Right cardiac atrium (tissue), 5 donors: ENCODE measurements at regions of chr6 and their contacts with region 1.

Region 1: DNA sequence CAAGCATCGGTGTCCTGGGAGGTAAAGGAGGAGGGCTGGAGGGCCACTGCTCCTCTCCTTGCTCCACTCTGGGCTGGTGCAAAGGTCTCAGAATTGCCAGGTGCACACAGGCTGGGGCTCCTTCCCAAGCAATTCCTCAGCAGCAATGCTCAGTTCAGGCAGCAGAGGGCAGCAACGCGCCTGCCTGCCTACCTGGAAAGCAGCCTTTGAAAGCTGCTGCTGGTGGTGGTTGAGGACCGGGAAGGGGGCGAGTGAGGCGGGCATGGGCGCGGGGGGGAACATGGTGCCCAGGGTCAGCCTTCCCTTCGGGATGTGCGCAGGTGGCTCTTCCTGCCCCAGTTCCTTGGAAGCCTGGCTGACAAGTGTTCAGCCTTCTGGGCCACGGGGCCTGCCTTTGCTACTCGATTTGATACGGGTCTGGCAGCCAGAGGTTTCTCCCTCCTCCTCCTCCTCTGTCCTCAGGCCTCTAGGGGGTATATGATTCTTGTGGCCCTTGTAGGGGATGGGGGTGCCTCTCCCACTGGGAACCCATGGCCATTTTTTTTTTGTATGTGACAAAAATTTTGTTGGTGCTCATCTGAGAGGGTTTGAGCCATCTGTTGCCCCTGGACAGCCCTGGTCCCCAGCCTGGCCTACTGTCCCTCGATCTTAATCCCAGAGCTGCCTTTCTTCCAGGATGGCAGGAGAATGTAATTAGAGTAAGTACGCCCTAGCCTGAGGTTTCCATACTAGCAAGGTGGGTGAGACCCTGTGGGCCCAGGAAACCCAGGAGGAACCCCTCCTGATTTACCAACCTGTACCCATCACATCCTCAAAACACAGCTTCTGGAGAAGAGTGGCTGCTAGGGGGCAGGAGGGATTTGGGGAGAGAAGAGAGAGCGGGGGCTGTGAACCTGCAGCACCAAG is 20.1 kb downstream of the MRPS18A start:
- DNase-seq: peak; percentile 76 to 93 (median 92)
- ATAC-seq: peak; percentile 33 to 56
- H3K4me3 ChIP-seq: no peak overlapping the region
- H3K27ac ChIP-seq: peak overlapping the region; percentile 61
- H3K4me1 ChIP-seq: peaks cover 21% of the 10 kb centered on the region
- H3K27me3 ChIP-seq: no peaks in the 10 kb centered on the region

Region 2: DNA sequence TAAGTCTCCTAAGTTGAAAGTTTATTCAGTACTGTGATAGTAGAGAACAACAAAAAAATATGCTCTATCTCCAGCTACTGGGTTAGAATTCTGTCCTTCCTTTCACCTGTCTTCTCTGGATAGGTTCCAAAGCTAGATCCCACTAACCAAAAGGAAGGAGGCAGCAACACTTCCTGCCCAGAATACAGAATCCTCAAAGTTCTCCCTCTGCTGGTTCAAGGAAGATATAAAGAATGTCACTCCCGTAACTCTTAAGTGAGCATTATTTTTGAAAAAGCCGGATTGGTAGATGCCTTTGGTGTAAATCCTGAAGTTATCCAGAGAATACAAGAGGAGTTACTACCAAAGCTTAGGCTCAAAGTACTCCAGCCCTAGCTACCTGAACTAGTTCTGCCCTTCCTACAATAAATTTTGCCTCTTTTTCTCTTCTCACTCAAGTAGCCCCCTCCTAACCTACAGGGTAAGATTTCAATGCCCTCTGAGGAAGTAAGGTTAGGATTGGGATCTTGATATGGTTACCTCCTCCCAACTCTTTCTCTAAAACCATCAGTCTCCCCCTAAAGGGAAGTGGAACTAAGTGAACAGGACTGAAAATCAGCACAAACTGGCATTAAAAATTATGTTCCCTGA is 332.9 kb before region 1 on chr6:
- intact Hi-C with region 1: no loop called
- DNase-seq: no peak
- ATAC-seq: peak; percentile 68 to 77
- H3K4me3 ChIP-seq: no peak overlapping the region
- H3K27ac ChIP-seq: no peak overlapping the region
- H3K4me1 ChIP-seq: no peaks in the 10 kb centered on the region
- H3K27me3 ChIP-seq: no peaks in the 10 kb centered on the region

Region 3: GRCh38 chr6:43758617-43759050 is 91.1 kb after region 1 on chr6:
- intact Hi-C with region 1: loop called in 1 of 4 experiments (anchors 5 kb)
- DNase-seq: peak in 1 of 3 donors; percentile 66
- ATAC-seq: peak; percentile 50 to 55
- H3K4me3 ChIP-seq: no peak overlapping the region
- H3K27ac ChIP-seq: no peak overlapping the region
- H3K4me1 ChIP-seq: no peaks in the 10 kb centered on the region
- H3K27me3 ChIP-seq: no peaks in the 10 kb centered on the region

Region 4: GRCh38 chr6:44086931-44087574 is 419.6 kb after region 1 on chr6:
- intact Hi-C with region 1: loop called in 1 of 4 experiments (anchors 10 kb)
- DNase-seq: peak; percentile 47 to 85 (median 78)
- ATAC-seq: peak; percentile 10 to 46
- H3K4me3 ChIP-seq: no peak overlapping the region
- H3K27ac ChIP-seq: no peak overlapping the region
- H3K4me1 ChIP-seq: peaks cover 4% of the 10 kb centered on the region
- H3K27me3 ChIP-seq: no peaks in the 10 kb centered on the region